WTC11 (cell line): ENCODE measurements at regions of chr7 and their contacts with region 1.

Region 1: DNA sequence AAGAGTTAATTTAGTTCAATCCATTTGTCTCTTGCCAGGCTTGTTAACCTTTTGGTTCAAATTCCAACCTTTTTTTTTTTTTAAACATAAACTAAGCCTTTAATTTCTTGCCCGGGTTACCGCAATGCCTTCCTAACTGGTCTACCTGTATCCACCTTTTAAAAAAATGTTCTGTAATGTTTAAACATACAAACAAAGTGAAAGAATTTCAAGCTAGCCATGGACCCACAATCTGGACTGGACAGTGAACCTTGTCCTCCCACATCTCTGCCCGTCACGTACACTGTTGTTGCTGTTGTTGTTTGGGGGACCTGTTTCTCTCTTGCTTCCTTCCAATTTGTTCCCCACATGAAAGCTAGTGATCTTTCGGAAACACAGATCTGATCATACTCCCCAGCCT is 724.7 kb upstream of the AUTS2 start:
- DNase-seq: no peak
- ATAC-seq: no peak
- H3K4me3 Mint-ChIP-seq: no peak overlapping the region
- H3K27ac Mint-ChIP-seq: no peak overlapping the region; the same call in 1 of the 2 replicates
- H3K4me1 Mint-ChIP-seq: peaks cover 3% of the 10 kb centered on the region
- H3K27me3 Mint-ChIP-seq: peaks cover 5% of the 10 kb centered on the region
- CTCF ChIP-seq: no peak

Region 2: DNA sequence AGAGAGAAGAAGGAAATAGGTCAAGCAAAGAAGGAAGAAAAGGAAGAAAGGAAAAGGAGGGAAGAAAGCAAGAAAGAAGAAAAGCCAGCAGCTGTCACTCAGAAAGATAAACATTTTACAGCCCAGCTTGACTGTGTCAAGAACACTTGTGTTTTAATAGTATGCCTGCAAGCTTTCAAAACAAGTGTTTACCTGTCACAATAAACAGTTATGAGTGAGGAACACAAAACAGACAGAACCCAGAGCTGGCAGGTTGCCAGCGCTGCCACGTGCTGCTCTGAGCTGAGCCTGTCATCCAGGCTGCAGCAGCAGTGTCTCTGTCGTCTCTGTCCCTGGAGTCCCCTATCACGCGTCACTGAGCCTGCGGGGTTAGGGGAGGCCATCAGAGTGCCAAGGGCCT is 103.0 kb before region 1 on chr7:
- CTCF ChIA-PET with region 1: no interaction called
- POLR2A ChIA-PET with region 1: no interaction called
- DNase-seq: no peak
- ATAC-seq: no peak
- H3K4me3 Mint-ChIP-seq: no peak overlapping the region
- H3K27ac Mint-ChIP-seq: peak overlapping the region; percentile 16; the same call in 1 of the 2 replicates
- H3K4me1 Mint-ChIP-seq: no peaks in the 10 kb centered on the region
- H3K27me3 Mint-ChIP-seq: no peaks in the 10 kb centered on the region
- CTCF ChIP-seq: no peak

Region 3: GRCh38 chr7:68917041-68917651 is 43.5 kb after region 1 on chr7:
- CTCF ChIA-PET with region 1: no interaction called
- POLR2A ChIA-PET with region 1: interaction called, 17 read pairs
- DNase-seq: no peak
- ATAC-seq: no peak
- H3K4me3 Mint-ChIP-seq: no peak overlapping the region
- H3K27ac Mint-ChIP-seq: no peak overlapping the region
- H3K4me1 Mint-ChIP-seq: peaks cover 12% of the 10 kb centered on the region
- H3K27me3 Mint-ChIP-seq: peaks cover 7% of the 10 kb centered on the region
- CTCF ChIP-seq: no peak

Region 4: GRCh38 chr7:69246758-69247157 is 373.1 kb after region 1 on chr7:
- CTCF ChIA-PET with region 1: no interaction called
- POLR2A ChIA-PET with region 1: no interaction called
- DNase-seq: no peak
- ATAC-seq: no peak
- H3K4me3 Mint-ChIP-seq: no peak overlapping the region
- H3K27ac Mint-ChIP-seq: no peak overlapping the region
- H3K4me1 Mint-ChIP-seq: peaks cover 6% of the 10 kb centered on the region
- H3K27me3 Mint-ChIP-seq: peaks cover 98% of the 10 kb centered on the region
- CTCF ChIP-seq: no peak